Mammary epithelial cell (primary cell): ENCODE measurements at regions of chr11 and their contacts with region 1.

Region 1: GRCh38 chr11:122101625-122102291 is 14.3 kb downstream of the BLID start:
- DNase-seq: peak; percentile 71
- H3K4me3 ChIP-seq: peak overlapping the region; percentile 52 to 83 (median 72)
- H3K27ac ChIP-seq: peak overlapping the region; percentile 67
- H3K4me1 ChIP-seq: peaks cover 54% of the 10 kb centered on the region
- H3K27me3 ChIP-seq: no peaks in the 10 kb centered on the region
- CTCF ChIP-seq: peak; percentile 39 to 71

Region 2: DNA sequence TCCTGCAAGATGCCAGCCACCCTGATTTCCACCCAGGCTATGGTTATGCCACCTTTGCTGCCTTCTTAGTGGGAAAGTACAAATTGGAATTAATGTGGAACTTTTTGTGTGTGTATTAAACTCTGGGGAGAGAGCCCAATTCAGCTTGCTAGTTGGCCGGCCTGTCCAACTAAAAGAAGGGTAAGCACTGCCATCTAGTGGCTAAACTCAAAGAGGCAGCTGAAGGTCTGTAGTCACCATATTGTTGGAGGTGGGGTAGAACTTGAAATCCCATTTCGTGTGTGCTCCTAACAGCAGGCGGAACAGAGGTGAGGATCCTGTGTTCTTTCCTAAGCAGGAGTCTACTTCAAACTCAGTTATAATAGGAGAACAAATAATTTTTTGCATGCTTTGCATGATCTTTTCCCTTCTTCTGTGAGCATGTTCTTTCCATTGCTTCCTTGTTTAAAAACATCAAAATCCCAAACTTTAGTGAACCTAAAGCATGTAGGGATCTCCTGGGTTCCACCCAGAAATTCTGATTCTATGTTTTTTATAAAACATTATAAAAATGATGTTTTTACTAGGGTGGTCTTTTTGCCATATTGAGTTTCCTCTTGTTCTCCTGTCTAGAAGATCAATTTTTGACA is 510.2 kb before region 1 on chr11:
- CTCF ChIA-PET with region 1: no interaction called
- dilution Hi-C with region 1: no loop called
- in situ Hi-C with region 1: no loop called
- intact Hi-C with region 1: loop called (anchors 5 kb)
- DNase-seq: peak; percentile 65
- H3K4me3 ChIP-seq: no peak overlapping the region
- H3K27ac ChIP-seq: no peak overlapping the region
- H3K4me1 ChIP-seq: peaks cover 16% of the 10 kb centered on the region
- H3K27me3 ChIP-seq: no peaks in the 10 kb centered on the region
- CTCF ChIP-seq: peak; percentile 82

Region 3: GRCh38 chr11:121870206-121871045 is 231.3 kb before region 1 on chr11:
- CTCF ChIA-PET with region 1: no interaction called
- dilution Hi-C with region 1: no loop called
- in situ Hi-C with region 1: no loop called
- intact Hi-C with region 1: loop called (anchors 2 kb)
- DNase-seq: no peak
- H3K4me3 ChIP-seq: no peak overlapping the region
- H3K27ac ChIP-seq: no peak overlapping the region
- H3K4me1 ChIP-seq: no peaks in the 10 kb centered on the region
- H3K27me3 ChIP-seq: peaks cover 5% of the 10 kb centered on the region
- CTCF ChIP-seq: peak in 1 of 2 donors; percentile 29

Region 4: DNA sequence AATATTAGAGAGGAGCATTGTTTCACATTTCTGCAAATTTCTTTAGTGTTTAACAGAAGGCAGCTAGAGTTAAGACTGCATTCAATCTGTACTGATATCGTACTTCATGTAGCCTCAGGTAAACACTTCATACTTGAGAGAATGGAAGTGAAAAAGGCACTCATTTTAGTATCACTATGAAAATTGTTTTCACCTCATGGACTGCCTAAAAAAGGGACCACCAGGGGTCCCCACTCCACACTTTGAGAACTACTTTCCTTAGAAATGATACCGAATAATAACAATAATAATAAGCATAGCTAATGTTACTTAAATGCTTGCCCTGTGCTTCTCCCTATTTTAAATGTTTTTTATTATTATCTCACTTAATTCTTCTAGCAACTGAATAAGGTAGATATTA is 80.9 kb before region 1 on chr11:
- CTCF ChIA-PET with region 1: interaction called, 6 read pairs
- dilution Hi-C with region 1: no loop called
- in situ Hi-C with region 1: no loop called
- intact Hi-C with region 1: loop called (anchors 1 kb)
- DNase-seq: no peak
- H3K4me3 ChIP-seq: no peak overlapping the region
- H3K27ac ChIP-seq: no peak overlapping the region
- H3K4me1 ChIP-seq: no peaks in the 10 kb centered on the region
- H3K27me3 ChIP-seq: no peaks in the 10 kb centered on the region
- CTCF ChIP-seq: peak; percentile 26 to 36

Region 5: GRCh38 chr11:122032317-122032716 is 69.4 kb before region 1 on chr11:
- CTCF ChIA-PET with region 1: no interaction called
- dilution Hi-C with region 1: no loop called
- in situ Hi-C with region 1: no loop called
- intact Hi-C with region 1: no loop called
- DNase-seq: no peak
- H3K4me3 ChIP-seq: no peak overlapping the region
- H3K27ac ChIP-seq: no peak overlapping the region
- H3K4me1 ChIP-seq: no peaks in the 10 kb centered on the region
- H3K27me3 ChIP-seq: no peaks in the 10 kb centered on the region
- CTCF ChIP-seq: no peak

Region 6: GRCh38 chr11:122115524-122116379 is 14.0 kb after region 1 on chr11 and contains the start of gene BLID:
- CTCF ChIA-PET with region 1: no interaction called
- dilution Hi-C with region 1: no loop called
- in situ Hi-C with region 1: no loop called
- intact Hi-C with region 1: no loop called
- DNase-seq: no peak
- H3K4me3 ChIP-seq: no peak within 1 kb of the TSS
- H3K27ac ChIP-seq: no peak within 1 kb of the TSS
- H3K4me1 ChIP-seq: no peaks in the 10 kb centered on the region
- H3K27me3 ChIP-seq: no peaks in the 10 kb centered on the region
- CTCF ChIP-seq: peak; percentile 79 to 81
- total RNA-seq, gene BLID: 5.2 to 5.6 TPM

Region 7: DNA sequence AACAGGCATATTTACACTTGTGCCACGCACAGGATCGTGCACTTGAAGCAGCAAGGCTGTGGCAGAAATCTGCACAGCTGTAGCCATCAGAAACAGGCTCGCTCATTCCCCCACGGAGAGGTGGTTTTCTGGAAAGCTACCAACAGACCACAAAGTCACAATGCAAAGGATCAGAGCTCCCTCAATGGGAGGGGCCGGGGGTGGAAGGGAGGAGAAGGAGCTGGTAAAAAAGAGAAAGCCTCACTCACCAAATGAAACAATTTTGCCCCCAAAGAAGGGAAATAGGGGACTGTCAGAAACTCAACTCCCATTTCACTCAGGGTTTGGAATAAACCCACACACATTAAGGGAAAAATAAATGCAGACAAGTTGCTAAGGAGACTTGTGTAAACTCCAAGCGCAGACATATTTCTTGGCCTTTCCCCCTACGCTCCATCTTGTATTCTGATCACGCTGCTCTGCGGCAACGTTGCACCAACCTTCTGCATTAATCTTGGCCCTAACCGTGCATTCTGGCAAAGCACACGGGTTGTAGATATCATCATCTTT is 57.5 kb after region 1 on chr11:
- CTCF ChIA-PET with region 1: no interaction called
- dilution Hi-C with region 1: no loop called
- in situ Hi-C with region 1: loop called in 1 of 2 experiments (anchors 5 kb)
- intact Hi-C with region 1: loop called (anchors 1 kb)
- DNase-seq: peak; percentile 52
- H3K4me3 ChIP-seq: peak overlapping the region; percentile 25 to 65 (median 37)
- H3K27ac ChIP-seq: peak overlapping the region; percentile 95
- H3K4me1 ChIP-seq: peaks cover 69% of the 10 kb centered on the region
- H3K27me3 ChIP-seq: no peaks in the 10 kb centered on the region
- CTCF ChIP-seq: no peak

Region 8: DNA sequence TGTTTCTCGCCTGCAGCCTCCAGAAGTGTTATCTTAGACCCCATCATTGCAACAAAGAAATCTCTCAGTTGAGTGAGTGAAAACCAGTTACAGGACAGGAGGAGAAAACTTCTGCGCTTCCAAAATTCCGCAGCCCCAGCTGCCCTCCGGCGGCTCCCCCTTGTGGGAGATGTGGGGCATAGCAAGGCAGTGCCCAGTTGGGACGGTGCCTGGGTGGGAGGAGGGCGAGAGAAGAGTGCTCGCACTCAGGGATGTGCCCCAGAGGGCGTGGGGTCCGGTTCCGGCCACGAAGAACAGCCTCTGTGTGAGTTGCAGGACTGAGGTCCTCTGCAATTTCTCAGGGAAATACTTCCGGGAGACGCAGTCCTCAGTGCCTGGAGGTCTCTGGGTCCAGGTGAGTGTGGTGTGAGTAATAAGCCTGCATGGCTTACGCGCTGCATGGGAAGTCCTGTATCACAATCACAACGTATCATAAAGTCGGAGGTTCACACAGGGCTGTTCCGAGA is 101.2 kb after region 1 on chr11:
- CTCF ChIA-PET with region 1: interaction called, 7 read pairs
- dilution Hi-C with region 1: no loop called
- in situ Hi-C with region 1: loop called in 1 of 2 experiments (anchors 10 kb)
- intact Hi-C with region 1: loop called (anchors 1 kb)
- DNase-seq: peak; percentile 93
- H3K4me3 ChIP-seq: peak overlapping the region; percentile 47 to 62 (median 59)
- H3K27ac ChIP-seq: peak overlapping the region; percentile 77
- H3K4me1 ChIP-seq: peaks cover 32% of the 10 kb centered on the region
- H3K27me3 ChIP-seq: no peaks in the 10 kb centered on the region
- CTCF ChIP-seq: peak; percentile 98 to 100